ENCODE measurements at regions of chr5 and their contacts with region 1.

Region 1: GRCh38 chr5:65426656-65427055 is 55.1 kb downstream of the ADAMTS6 start:
- DNase-seq: no peak
- ATAC-seq: no peak
- H3K4me3 ChIP-seq: no peak overlapping the region
- H3K27ac ChIP-seq: no peak overlapping the region
- H3K4me1 ChIP-seq: no peaks in the 10 kb centered on the region
- H3K27me3 ChIP-seq: no peaks in the 10 kb centered on the region
- CTCF ChIP-seq: no peak
- EP300 ChIP-seq: no peak
- POLR2A ChIP-seq: no peak
- RAD21 ChIP-seq: no peak

Region 2: DNA sequence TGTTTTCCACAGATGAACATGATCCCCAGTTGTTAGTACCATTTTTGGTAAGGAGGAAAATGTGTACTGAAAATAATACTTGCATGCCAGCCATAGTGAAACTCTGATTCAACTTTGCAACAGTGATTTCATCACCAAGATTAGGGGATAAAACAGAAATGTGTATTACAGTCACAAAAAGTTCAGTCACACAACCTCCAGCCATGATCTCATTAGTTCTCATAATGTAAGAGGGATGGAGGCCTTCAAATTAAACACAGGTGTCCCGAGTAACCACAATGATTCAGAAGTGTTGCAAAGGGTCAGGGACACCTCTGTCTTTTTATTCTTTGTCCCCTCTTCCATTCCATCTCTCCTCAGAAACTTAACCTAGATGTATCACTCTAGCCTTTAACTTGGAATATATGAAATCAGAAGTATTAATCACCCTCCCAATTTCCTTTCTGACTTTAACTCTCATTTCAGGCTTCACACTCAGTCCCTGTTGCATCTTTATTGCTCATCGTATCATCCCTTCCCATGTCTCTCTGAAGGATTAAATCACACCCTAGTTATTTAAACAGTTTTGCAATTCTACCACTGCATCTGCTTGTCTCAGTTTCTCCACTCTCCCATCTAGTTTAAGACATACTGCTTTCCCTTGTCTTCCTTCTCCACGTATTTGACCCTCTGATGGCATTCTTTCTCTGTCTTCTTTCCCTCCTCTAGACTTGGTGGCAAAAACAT is 236.2 kb before region 1 on chr5:
- CTCF ChIA-PET with region 1: no interaction called
- POLR2A ChIA-PET with region 1: no interaction called
- RAD21 ChIA-PET with region 1: no interaction called
- SMC1A ChIA-PET with region 1: no interaction called
- in situ Hi-C with region 1: no loop called
- intact Hi-C with region 1: no loop called
- DNase-seq: peak; percentile 17
- ATAC-seq: peak; percentile 92
- H3K4me3 ChIP-seq: no peak overlapping the region
- H3K27ac ChIP-seq: no peak overlapping the region
- H3K4me1 ChIP-seq: peaks cover 7% of the 10 kb centered on the region
- H3K27me3 ChIP-seq: no peaks in the 10 kb centered on the region
- CTCF ChIP-seq: no peak
- EP300 ChIP-seq: peak in 1 of 2 experiments; percentile 47; a peak in 1 of 4 replicates
- POLR2A ChIP-seq: no peak
- RAD21 ChIP-seq: no peak

Region 3: GRCh38 chr5:65440456-65440855 is 13.8 kb after region 1 on chr5:
- CTCF ChIA-PET with region 1: no interaction called
- POLR2A ChIA-PET with region 1: interaction called, 3 read pairs
- RAD21 ChIA-PET with region 1: no interaction called
- SMC1A ChIA-PET with region 1: no interaction called
- in situ Hi-C with region 1: no loop called
- intact Hi-C with region 1: loop called (anchors 2 kb)
- DNase-seq: no peak
- ATAC-seq: peak; percentile 77
- H3K4me3 ChIP-seq: no peak overlapping the region
- H3K27ac ChIP-seq: no peak overlapping the region
- H3K4me1 ChIP-seq: no peaks in the 10 kb centered on the region
- H3K27me3 ChIP-seq: no peaks in the 10 kb centered on the region
- CTCF ChIP-seq: no peak
- EP300 ChIP-seq: peak in 1 of 2 experiments; percentile 30; a peak in 1 of 4 replicates
- POLR2A ChIP-seq: no peak
- RAD21 ChIP-seq: no peak